CD4-positive, alpha-beta T cell (primary cell): ENCODE measurements at regions of chr5 and their contacts with region 1.

Region 1: GRCh38 chr5:39058178-39058921 is 15.8 kb downstream of the RICTOR start:
- DNase-seq: peak in 1 of 14 experiments; percentile 27
- ATAC-seq: no peak
- H3K4me3 ChIP-seq: peak overlapping the region; percentile 30
- H3K4me3 Mint-ChIP-seq: peak overlapping the region; percentile 78
- H3K27ac ChIP-seq: no peak overlapping the region
- H3K27ac Mint-ChIP-seq: peak overlapping the region; percentile 34
- H3K4me1 ChIP-seq: peaks cover 1% of the 10 kb centered on the region
- H3K4me1 Mint-ChIP-seq: peaks cover 91% of the 10 kb centered on the region
- H3K27me3 ChIP-seq: no peaks in the 10 kb centered on the region
- H3K27me3 Mint-ChIP-seq: no peaks in the 10 kb centered on the region
- CTCF ChIP-seq: no peak

Region 2: GRCh38 chr5:39015743-39016586 is 42.4 kb before region 1 on chr5:
- CTCF ChIA-PET with region 1: no interaction called
- POLR2A ChIA-PET with region 1: no interaction called
- intact Hi-C with region 1: loop called (anchors 5 kb)
- DNase-seq: no peak
- ATAC-seq: no peak
- H3K4me3 ChIP-seq: no peak overlapping the region
- H3K4me3 Mint-ChIP-seq: no peak overlapping the region
- H3K27ac ChIP-seq: no peak overlapping the region
- H3K27ac Mint-ChIP-seq: peak overlapping the region; percentile 43
- H3K4me1 ChIP-seq: no peaks in the 10 kb centered on the region
- H3K4me1 Mint-ChIP-seq: peaks cover 52% of the 10 kb centered on the region
- H3K27me3 ChIP-seq: no peaks in the 10 kb centered on the region
- H3K27me3 Mint-ChIP-seq: no peaks in the 10 kb centered on the region
- CTCF ChIP-seq: no peak

Region 3: GRCh38 chr5:39024005-39024404 is 34.3 kb before region 1 on chr5:
- CTCF ChIA-PET with region 1: no interaction called
- POLR2A ChIA-PET with region 1: interaction called, 3 read pairs
- intact Hi-C with region 1: loop called (anchors 5 kb)
- DNase-seq: peak in 4 of 14 experiments; percentile 6 to 34 (median 21)
- ATAC-seq: peak; percentile 59
- H3K4me3 ChIP-seq: no peak overlapping the region
- H3K4me3 Mint-ChIP-seq: no peak overlapping the region
- H3K27ac ChIP-seq: no peak overlapping the region
- H3K27ac Mint-ChIP-seq: no peak overlapping the region
- H3K4me1 ChIP-seq: peaks cover 17% of the 10 kb centered on the region
- H3K4me1 Mint-ChIP-seq: peaks cover 66% of the 10 kb centered on the region
- H3K27me3 ChIP-seq: no peaks in the 10 kb centered on the region
- H3K27me3 Mint-ChIP-seq: no peaks in the 10 kb centered on the region
- CTCF ChIP-seq: no peak